Calu3 (cell line): ENCODE measurements at regions of chr2 and their contacts with region 1.

Region 1: GRCh38 chr2:118865106-118865505 is 17.7 kb upstream of the EN1 start:
- DNase-seq: peak; percentile 66
- H3K4me3 Mint-ChIP-seq: no peak overlapping the region
- H3K27ac Mint-ChIP-seq: no peak overlapping the region
- H3K4me1 Mint-ChIP-seq: peaks cover 11% of the 10 kb centered on the region
- H3K27me3 Mint-ChIP-seq: no peaks in the 10 kb centered on the region
- CTCF ChIP-seq: peak; percentile 84

Region 2: GRCh38 chr2:117814417-117815264 is 1050.5 kb before region 1 on chr2 and contains the start of gene DDX18:
- CTCF ChIA-PET with region 1: no interaction called
- intact Hi-C with region 1: loop called (anchors 10 kb)
- DNase-seq: peak; percentile 96
- H3K4me3 Mint-ChIP-seq: peak within 1 kb of the TSS; percentile 90
- H3K27ac Mint-ChIP-seq: peak within 1 kb of the TSS; percentile 89
- H3K4me1 Mint-ChIP-seq: peaks cover 7% of the 10 kb centered on the region
- H3K27me3 Mint-ChIP-seq: no peaks in the 10 kb centered on the region
- CTCF ChIP-seq: peak; percentile 98
- total RNA-seq, gene DDX18: 106 and 114 TPM in 2 replicates

Region 3: GRCh38 chr2:118032169-118033013 is 832.7 kb before region 1 on chr2:
- CTCF ChIA-PET with region 1: no interaction called
- intact Hi-C with region 1: loop called (anchors 2 kb)
- DNase-seq: peak; percentile 53
- H3K4me3 Mint-ChIP-seq: no peak overlapping the region
- H3K27ac Mint-ChIP-seq: no peak overlapping the region
- H3K4me1 Mint-ChIP-seq: peaks cover 8% of the 10 kb centered on the region
- H3K27me3 Mint-ChIP-seq: no peaks in the 10 kb centered on the region
- CTCF ChIP-seq: peak; percentile 76

Region 4: GRCh38 chr2:118202707-118203303 is 662.3 kb before region 1 on chr2:
- CTCF ChIA-PET with region 1: no interaction called
- intact Hi-C with region 1: loop called (anchors 2 kb)
- DNase-seq: peak; percentile 59
- H3K4me3 Mint-ChIP-seq: no peak overlapping the region
- H3K27ac Mint-ChIP-seq: no peak overlapping the region
- H3K4me1 Mint-ChIP-seq: peaks cover 8% of the 10 kb centered on the region
- H3K27me3 Mint-ChIP-seq: no peaks in the 10 kb centered on the region
- CTCF ChIP-seq: peak; percentile 86

Region 5: GRCh38 chr2:118554616-118555015 is 310.5 kb before region 1 on chr2:
- CTCF ChIA-PET with region 1: no interaction called
- intact Hi-C with region 1: loop called (anchors 10 kb)
- DNase-seq: no peak
- H3K4me3 Mint-ChIP-seq: no peak overlapping the region
- H3K27ac Mint-ChIP-seq: no peak overlapping the region
- H3K4me1 Mint-ChIP-seq: no peaks in the 10 kb centered on the region
- H3K27me3 Mint-ChIP-seq: peaks cover 15% of the 10 kb centered on the region
- CTCF ChIP-seq: no peak

Region 6: DNA sequence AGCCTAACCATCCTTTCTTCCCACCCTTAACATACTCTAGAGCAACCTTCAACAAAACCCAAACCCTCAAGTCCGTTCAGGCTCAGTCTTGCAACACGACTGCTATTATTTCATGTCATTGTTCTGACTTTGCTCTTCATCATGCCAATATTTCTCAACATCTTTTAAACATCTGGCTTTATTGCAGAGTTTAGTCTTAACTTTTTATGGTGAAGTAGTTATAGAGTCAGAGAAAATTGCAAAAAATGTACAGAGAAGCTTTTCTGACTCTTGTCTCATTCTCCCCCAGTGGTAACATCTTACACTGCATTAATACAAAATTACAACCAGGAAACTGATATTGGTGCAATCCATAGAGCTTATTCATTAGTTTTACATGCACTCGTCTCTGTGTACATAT is 80.8 kb after region 1 on chr2:
- CTCF ChIA-PET with region 1: no interaction called
- intact Hi-C with region 1: no loop called
- DNase-seq: no peak
- H3K4me3 Mint-ChIP-seq: no peak overlapping the region
- H3K27ac Mint-ChIP-seq: no peak overlapping the region
- H3K4me1 Mint-ChIP-seq: no peaks in the 10 kb centered on the region
- H3K27me3 Mint-ChIP-seq: peaks cover 72% of the 10 kb centered on the region
- CTCF ChIP-seq: no peak